Mammary epithelial cell (primary cell): ENCODE measurements at regions of chr6 and their contacts with region 1.

Region 1: DNA sequence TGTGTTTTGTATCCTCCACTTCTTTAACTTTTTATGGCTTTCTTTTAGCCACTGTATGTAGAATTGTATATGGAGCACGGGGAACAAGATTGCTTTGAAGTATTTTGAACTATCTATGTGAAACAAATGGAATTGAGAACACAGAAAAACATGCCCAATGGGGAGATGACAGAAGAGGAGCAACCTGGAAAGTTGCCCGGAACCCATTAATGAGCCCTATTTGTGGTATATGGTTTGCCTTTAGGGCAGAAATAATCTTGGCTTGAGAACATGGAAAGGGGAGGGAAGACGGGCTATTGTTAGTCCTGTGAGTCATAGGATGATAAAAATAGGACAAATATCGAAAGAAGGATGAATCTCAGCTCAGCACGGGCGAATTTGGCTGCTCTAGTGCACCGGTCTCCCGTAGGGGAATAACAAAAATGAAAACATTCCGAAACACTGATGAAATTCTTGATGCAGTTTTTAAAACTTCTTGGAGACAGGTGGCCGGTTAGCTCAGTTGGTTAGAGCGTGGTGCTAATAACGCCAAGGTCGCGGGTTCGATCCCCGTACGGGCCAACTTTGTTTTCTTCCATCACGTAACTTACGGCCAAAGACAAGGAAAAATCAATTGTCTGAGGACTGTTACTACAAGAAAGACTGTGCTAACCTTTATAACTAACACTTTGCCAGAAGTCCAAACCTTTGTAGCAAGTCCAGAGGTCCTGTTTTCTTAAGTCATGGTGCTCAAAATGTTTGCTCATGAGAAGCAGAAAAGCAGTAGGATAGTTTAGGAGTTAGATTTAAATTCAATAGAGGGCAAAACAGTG is 15.7 kb downstream of the HMGN4 start:
- DNase-seq: peak; percentile 89
- H3K4me3 ChIP-seq: peak overlapping the region; percentile 48 to 56 (median 54)
- H3K27ac ChIP-seq: peak overlapping the region; percentile 23
- H3K4me1 ChIP-seq: peaks cover 20% of the 10 kb centered on the region
- H3K27me3 ChIP-seq: no peaks in the 10 kb centered on the region
- CTCF ChIP-seq: no peak

Region 2: DNA sequence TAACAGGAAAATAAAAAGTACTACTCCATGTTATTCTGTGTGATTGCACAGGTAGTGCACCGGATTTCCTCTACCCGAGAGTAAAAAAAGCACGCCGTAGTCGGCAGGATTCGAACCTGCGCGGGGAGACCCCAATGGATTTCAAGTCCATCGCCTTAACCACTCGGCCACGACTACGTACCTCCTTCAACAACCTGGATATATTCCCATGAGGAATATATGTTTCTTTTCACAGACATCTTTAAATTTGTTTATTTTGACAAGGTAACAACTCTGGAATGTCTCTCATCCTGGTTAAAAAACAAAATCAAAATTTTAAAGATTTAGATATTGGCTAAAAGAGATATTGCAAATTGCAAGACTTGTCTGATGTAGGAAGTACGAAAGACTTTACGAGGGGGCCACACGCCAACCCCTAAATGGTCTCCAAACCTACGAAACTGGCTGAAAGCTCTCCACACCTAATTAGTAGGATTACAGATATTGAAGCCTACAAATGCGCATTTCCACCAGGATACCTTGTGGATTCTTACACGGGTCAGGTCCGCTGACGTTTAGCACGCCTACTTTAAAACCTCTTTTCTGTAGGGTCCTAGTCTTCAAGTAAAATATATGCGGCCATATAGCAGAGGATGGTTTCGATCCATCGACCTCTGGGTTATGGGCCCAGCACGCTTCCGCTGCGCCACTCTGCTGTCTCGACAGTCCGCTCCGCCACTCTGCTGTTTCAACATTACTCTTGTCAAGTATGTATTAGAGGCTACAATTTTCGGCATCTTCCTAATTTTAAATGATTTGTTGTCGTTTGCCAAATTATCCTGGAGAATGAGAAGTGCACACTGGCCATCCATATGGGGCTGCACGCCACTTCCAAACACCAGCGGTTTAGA is 241.1 kb before region 1 on chr6:
- CTCF ChIA-PET with region 1: no interaction called
- dilution Hi-C with region 1: no loop called
- in situ Hi-C with region 1: no loop called
- intact Hi-C with region 1: loop called (anchors 1 kb)
- DNase-seq: peak; percentile 81
- H3K4me3 ChIP-seq: peak overlapping the region; percentile 60 to 89 (median 70)
- H3K27ac ChIP-seq: peak overlapping the region; percentile 58
- H3K4me1 ChIP-seq: peaks cover 28% of the 10 kb centered on the region
- H3K27me3 ChIP-seq: no peaks in the 10 kb centered on the region
- CTCF ChIP-seq: no peak

Region 3: DNA sequence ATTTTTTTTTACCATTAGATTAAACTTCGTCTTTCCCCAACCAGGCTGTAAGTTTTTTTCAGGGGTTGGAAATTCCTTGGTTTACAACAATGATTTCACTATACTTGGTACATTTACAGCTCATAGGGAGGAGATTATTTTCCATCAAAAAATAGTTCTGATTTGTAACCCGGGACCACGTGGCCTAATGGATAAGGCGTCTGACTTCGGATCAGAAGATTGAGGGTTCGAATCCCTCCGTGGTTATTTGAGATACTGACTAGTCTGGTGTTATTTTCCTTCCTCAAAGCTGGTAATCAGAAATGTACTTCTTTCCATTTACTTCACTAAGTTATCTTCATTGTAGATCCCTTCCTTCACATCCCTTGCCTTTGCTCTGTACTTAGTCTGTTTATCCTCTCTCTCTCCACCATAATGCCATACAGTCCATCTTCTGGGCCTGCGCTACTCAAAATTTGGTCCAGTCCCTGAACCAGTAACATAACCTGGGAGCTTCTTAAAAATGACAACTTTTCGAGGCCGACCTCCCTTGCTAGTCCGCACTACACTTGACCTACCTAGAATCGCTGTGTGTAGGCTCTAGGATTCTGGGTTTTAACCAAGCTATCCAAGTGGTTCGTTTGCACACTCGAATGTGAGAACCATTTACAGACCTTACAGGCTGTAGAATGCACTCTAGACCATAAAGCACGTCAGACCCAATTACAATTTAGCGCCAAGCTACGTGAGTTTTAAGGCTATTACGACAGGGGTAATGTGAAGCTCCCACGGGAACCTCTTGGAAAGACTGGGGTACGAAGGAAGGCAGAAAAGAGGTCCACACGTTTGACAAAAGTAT is 231.0 kb before region 1 on chr6:
- CTCF ChIA-PET with region 1: no interaction called
- dilution Hi-C with region 1: no loop called
- in situ Hi-C with region 1: loop called in 1 of 2 experiments (anchors 10 kb)
- intact Hi-C with region 1: no loop called
- DNase-seq: peak; percentile 90
- H3K4me3 ChIP-seq: peak overlapping the region; percentile 54 to 87 (median 60)
- H3K27ac ChIP-seq: peak overlapping the region; percentile 34
- H3K4me1 ChIP-seq: no peaks in the 10 kb centered on the region
- H3K27me3 ChIP-seq: no peaks in the 10 kb centered on the region
- CTCF ChIP-seq: no peak

Region 4: GRCh38 chr6:26394289-26394688 is 159.6 kb before region 1 on chr6:
- CTCF ChIA-PET with region 1: no interaction called
- dilution Hi-C with region 1: no loop called
- in situ Hi-C with region 1: no loop called
- intact Hi-C with region 1: loop called (anchors 5 kb)
- DNase-seq: peak; percentile 88
- H3K4me3 ChIP-seq: no peak overlapping the region
- H3K27ac ChIP-seq: no peak overlapping the region
- H3K4me1 ChIP-seq: peaks cover 5% of the 10 kb centered on the region
- H3K27me3 ChIP-seq: no peaks in the 10 kb centered on the region
- CTCF ChIP-seq: no peak

Region 5: GRCh38 chr6:26473758-26474438 is 79.9 kb before region 1 on chr6:
- CTCF ChIA-PET with region 1: no interaction called
- dilution Hi-C with region 1: no loop called
- in situ Hi-C with region 1: no loop called
- intact Hi-C with region 1: no loop called
- DNase-seq: peak; percentile 93
- H3K4me3 ChIP-seq: peak overlapping the region; percentile 52 to 72 (median 67)
- H3K27ac ChIP-seq: peak overlapping the region; percentile 87
- H3K4me1 ChIP-seq: peaks cover 16% of the 10 kb centered on the region
- H3K27me3 ChIP-seq: no peaks in the 10 kb centered on the region
- CTCF ChIP-seq: no peak

Region 6: DNA sequence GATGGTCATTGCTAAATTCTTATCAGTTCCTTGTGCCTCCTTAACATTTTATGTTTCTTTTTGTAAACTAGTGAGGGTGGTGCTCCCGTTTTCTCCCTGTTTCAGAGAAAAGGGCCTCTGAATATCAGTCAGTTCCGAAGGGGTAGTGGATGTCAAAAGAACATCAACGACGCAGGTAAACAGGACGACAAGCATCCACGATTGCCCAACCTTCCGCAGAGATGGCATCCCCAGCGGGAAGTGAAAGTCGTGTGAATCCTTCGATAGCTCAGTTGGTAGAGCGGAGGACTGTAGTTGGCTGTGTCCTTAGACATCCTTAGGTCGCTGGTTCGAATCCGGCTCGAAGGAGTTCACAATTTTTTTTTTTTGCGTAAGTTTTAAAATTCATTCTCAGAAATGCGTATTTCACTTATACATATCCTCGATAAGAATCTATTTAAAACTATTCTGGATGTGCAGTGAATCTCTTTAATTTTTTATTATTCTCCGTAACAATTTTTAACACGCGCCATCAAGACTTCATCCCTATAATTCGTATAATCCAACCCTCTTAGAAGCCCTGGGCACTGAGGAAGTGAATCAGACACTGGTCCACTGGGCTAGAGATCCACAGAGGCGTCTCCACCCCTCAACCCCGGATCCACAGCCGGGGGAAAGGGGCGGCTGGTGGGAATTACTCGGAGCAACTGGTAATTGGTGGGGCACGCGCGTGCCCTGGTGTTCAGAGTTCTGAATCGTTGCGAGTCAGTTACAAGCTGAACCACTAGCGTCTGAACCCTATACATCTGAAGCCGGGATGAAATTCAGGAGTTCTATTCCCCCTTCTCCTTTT is 15.0 kb after region 1 on chr6:
- CTCF ChIA-PET with region 1: no interaction called
- dilution Hi-C with region 1: no loop called
- in situ Hi-C with region 1: no loop called
- intact Hi-C with region 1: loop called (anchors 1 kb)
- DNase-seq: peak; percentile 85
- H3K4me3 ChIP-seq: peak overlapping the region; percentile 62 to 73 (median 71)
- H3K27ac ChIP-seq: no peak overlapping the region
- H3K4me1 ChIP-seq: no peaks in the 10 kb centered on the region
- H3K27me3 ChIP-seq: no peaks in the 10 kb centered on the region
- CTCF ChIP-seq: peak in 1 of 2 donors; percentile 27

Region 7: GRCh38 chr6:26596579-26597388 is 42.9 kb after region 1 on chr6 and contains the start of gene ABT1:
- CTCF ChIA-PET with region 1: interaction called, 3 read pairs
- dilution Hi-C with region 1: loop called (anchors 5 kb)
- in situ Hi-C with region 1: no loop called
- intact Hi-C with region 1: no loop called
- DNase-seq: peak; percentile 98
- H3K4me3 ChIP-seq: peak within 1 kb of the TSS; percentile 61 to 99 (median 89)
- H3K27ac ChIP-seq: peak within 1 kb of the TSS; percentile 68
- H3K4me1 ChIP-seq: peaks cover 19% of the 10 kb centered on the region
- H3K27me3 ChIP-seq: no peaks in the 10 kb centered on the region
- CTCF ChIP-seq: no peak
- total RNA-seq, gene ABT1: 14.2 to 15.9 TPM

Region 8: DNA sequence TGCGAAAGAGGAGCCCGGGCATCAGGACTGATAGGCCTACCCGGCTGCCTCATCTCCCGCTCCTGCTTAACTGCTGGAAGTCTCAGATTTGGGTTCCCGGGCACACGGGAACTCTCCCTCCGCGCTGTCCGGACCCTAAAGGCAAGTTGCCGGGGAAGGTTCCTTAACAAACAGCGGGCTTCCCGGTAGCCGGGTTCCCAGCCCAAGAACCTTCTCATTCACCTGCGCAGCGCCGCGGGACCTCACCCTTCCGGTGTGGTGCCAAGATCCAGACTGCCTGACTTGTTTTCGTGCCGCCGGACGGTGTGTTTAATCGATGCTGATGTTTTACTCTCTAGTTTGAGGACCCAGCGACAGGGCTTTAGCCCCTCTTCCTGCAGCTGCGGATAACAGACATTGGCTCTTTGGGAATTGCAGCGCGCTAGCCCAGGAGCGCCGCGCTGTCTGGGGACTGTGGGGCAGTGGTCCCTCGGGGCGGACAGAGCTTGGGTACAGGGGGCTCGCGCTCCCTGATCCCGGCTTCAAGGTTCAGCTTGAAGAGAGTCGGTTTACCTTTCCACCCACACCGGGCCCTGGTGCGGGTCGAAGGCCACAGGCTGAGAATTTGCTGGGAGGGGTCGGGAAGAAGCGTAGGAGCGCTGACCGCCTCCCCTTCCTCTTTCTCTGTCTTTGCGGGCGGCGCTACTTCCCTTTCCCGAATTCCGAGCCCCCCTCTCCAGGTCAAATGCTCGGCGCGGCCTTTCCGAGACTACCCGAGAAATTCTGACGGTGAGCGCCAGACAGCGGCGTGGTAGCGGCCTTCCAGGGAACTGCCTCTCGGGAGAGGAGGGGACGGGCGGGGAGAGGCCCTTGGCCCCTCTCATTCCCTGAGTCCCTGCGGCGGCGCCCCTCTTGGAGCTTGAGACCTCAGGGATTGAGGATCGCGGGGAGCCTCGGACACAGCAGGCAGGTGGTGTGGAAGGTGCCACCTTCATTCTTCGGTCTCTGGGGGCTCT is 60.1 kb after region 1 on chr6:
- CTCF ChIA-PET with region 1: no interaction called
- dilution Hi-C with region 1: no loop called
- in situ Hi-C with region 1: no loop called
- intact Hi-C with region 1: no loop called
- DNase-seq: no peak
- H3K4me3 ChIP-seq: no peak overlapping the region
- H3K27ac ChIP-seq: no peak overlapping the region
- H3K4me1 ChIP-seq: no peaks in the 10 kb centered on the region
- H3K27me3 ChIP-seq: peaks cover 18% of the 10 kb centered on the region
- CTCF ChIP-seq: no peak

Region 9: GRCh38 chr6:26659042-26659999 is 105.5 kb after region 1 on chr6 and contains the start of gene ZNF322:
- CTCF ChIA-PET with region 1: no interaction called
- dilution Hi-C with region 1: no loop called
- in situ Hi-C with region 1: no loop called
- intact Hi-C with region 1: no loop called
- DNase-seq: peak; percentile 86
- H3K4me3 ChIP-seq: peak within 1 kb of the TSS; percentile 70 to 90 (median 71)
- H3K27ac ChIP-seq: peak within 1 kb of the TSS; percentile 38
- H3K4me1 ChIP-seq: peaks cover 10% of the 10 kb centered on the region
- H3K27me3 ChIP-seq: peaks cover 4% of the 10 kb centered on the region
- CTCF ChIP-seq: no peak
- total RNA-seq, gene ZNF322: 14.3 to 17.8 TPM